ENCODE measurements at regions of chr15 and their contacts with region 1.

Region 1: DNA sequence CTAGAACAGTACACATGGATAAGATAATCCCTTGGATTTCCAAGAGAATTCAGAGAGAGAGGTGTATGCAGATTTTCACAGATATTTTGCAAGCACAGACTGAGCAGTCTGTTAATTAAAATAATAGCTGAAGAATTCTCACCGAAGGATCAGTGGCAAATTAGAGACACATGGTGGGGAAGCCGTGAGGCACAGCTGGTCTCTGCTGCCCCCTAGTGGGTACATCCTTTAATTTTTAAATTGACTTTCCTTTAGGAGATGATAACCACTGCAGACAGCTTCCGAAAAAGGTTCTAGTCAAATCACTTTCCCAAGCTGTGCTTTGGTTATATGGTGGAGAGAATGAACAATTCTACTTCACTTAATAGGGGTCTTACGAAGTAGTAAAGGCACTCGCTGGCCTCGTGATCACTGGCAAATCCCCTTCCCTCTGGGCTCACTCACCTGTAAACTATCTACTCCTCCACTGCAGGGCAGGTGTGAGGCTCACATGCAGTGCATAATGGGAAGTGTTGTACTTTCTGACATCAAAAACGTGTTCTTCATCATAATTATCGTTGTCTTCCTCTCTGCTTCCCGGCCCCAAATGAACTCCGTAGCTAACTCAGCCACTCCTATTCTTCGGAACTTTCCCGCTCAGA is 19.5 kb downstream of the MESD start:
- DNase-seq: peak in 2 of 3 donors; percentile 41 to 86
- ATAC-seq: peak; percentile 87
- H3K4me3 ChIP-seq: no peak overlapping the region
- H3K4me1 ChIP-seq: no peaks in the 10 kb centered on the region
- CTCF ChIP-seq: peak; percentile 51

Region 2: GRCh38 chr15:80415271-80415670 is 554.9 kb before region 1 on chr15:
- intact Hi-C with region 1: no loop called
- DNase-seq: no peak
- ATAC-seq: no peak
- H3K4me3 ChIP-seq: no peak overlapping the region
- H3K4me1 ChIP-seq: no peaks in the 10 kb centered on the region
- CTCF ChIP-seq: no peak

Region 3: GRCh38 chr15:80461356-80462095 is 508.6 kb before region 1 on chr15:
- intact Hi-C with region 1: loop called in 1 of 2 experiments (anchors 10 kb)
- DNase-seq: no peak
- ATAC-seq: no peak
- H3K4me3 ChIP-seq: no peak overlapping the region
- H3K4me1 ChIP-seq: no peaks in the 10 kb centered on the region
- CTCF ChIP-seq: no peak

Region 4: GRCh38 chr15:81038975-81039607 is 69.0 kb after region 1 on chr15:
- intact Hi-C with region 1: no loop called
- DNase-seq: no peak
- ATAC-seq: no peak
- H3K4me3 ChIP-seq: no peak overlapping the region
- H3K4me1 ChIP-seq: no peaks in the 10 kb centered on the region
- CTCF ChIP-seq: no peak

Region 5: GRCh38 chr15:81516461-81516860 is 546.3 kb after region 1 on chr15:
- intact Hi-C with region 1: no loop called
- DNase-seq: no peak
- ATAC-seq: no peak
- H3K4me3 ChIP-seq: no peak overlapping the region
- H3K4me1 ChIP-seq: no peaks in the 10 kb centered on the region
- CTCF ChIP-seq: no peak